Activated CD4-positive, alpha-beta T cell treated with anti-CD3 and anti-CD28 coated beads, Interleukin-2, amount 10 ng/mL, durations not matched to agents 24 days and 14 days (primary cell): ENCODE measurements at regions of chr6 and their contacts with region 1.

Region 1: GRCh38 chr6:155126727-155127439 is 131.8 kb downstream of the TIAM2 start:
- DNase-seq: peak; percentile 72
- H3K4me3 Mint-ChIP-seq: peak overlapping the region; percentile 68
- H3K27ac Mint-ChIP-seq: peak overlapping the region; percentile 97
- H3K4me1 Mint-ChIP-seq: peaks cover 51% of the 10 kb centered on the region
- H3K27me3 Mint-ChIP-seq: no peaks in the 10 kb centered on the region

Region 2: GRCh38 chr6:154928325-154928922 is 198.5 kb before region 1 on chr6:
- intact Hi-C with region 1: loop called (anchors 1 kb)
- DNase-seq: peak; percentile 90
- H3K4me3 Mint-ChIP-seq: no peak overlapping the region
- H3K27ac Mint-ChIP-seq: peak overlapping the region; percentile 12
- H3K4me1 Mint-ChIP-seq: peaks cover 19% of the 10 kb centered on the region
- H3K27me3 Mint-ChIP-seq: no peaks in the 10 kb centered on the region

Region 3: DNA sequence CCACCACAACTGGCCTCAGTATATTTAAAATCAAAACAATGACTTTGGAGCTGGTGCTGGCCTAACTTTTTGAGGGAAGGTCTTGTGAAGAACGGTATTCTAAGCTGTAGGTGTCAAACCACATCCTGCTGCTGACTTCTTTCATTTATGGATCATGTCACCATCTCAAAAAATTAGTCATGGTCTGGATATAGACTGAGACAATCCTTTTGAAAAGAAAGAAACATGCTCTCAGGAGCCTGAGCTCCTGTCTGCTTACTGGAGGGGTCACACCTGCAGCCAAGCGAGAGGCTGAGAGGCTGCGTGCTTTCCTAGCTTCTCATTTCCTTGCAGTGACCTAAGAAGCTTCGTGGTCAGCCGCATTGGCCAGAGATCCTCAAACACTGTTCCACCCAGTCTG is 76.6 kb before region 1 on chr6:
- intact Hi-C with region 1: loop called (anchors 1 kb)
- DNase-seq: peak; percentile 82
- H3K4me3 Mint-ChIP-seq: peak overlapping the region; percentile 65
- H3K27ac Mint-ChIP-seq: peak overlapping the region; percentile 95
- H3K4me1 Mint-ChIP-seq: peaks cover 36% of the 10 kb centered on the region
- H3K27me3 Mint-ChIP-seq: no peaks in the 10 kb centered on the region

Region 4: GRCh38 chr6:155062866-155063341 is 64.0 kb before region 1 on chr6:
- intact Hi-C with region 1: no loop called
- DNase-seq: no peak
- H3K4me3 Mint-ChIP-seq: no peak overlapping the region
- H3K27ac Mint-ChIP-seq: no peak overlapping the region
- H3K4me1 Mint-ChIP-seq: peaks cover 10% of the 10 kb centered on the region
- H3K27me3 Mint-ChIP-seq: peaks cover 2% of the 10 kb centered on the region

Region 5: GRCh38 chr6:155115893-155116570 is 10.9 kb before region 1 on chr6:
- intact Hi-C with region 1: loop called (anchors 1 kb)
- DNase-seq: no peak
- H3K4me3 Mint-ChIP-seq: peak overlapping the region; percentile 47
- H3K27ac Mint-ChIP-seq: peak overlapping the region; percentile 86
- H3K4me1 Mint-ChIP-seq: peaks cover 31% of the 10 kb centered on the region
- H3K27me3 Mint-ChIP-seq: no peaks in the 10 kb centered on the region

Region 6: DNA sequence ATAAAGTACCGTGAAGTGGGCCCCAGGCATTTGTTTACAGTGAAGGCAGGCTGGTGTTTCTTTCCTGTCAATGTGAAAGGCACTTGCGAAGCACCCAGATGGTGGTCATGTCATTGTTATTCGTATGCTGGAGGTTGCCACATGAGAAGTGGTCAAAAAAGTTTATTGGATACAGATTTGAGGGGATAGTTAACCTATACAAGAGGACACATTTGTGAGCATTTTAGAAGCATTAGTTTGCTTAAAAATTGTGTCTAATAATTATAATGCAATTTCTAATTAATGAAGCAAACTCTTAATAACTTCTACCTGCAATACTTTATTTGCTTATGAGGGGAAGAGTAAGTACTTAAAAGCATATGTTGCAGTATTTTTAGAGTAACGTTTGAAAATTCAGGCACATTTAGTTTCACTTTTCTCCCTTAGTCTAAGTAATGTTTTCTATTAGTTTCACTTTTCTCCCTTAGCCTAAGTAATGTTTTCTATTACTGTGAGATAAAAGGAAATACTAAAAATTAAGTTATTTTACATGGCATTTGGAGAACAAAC is 16.2 kb after region 1 on chr6:
- intact Hi-C with region 1: no loop called
- DNase-seq: peak; percentile 62
- H3K4me3 Mint-ChIP-seq: peak overlapping the region; percentile 57
- H3K27ac Mint-ChIP-seq: peak overlapping the region; percentile 67
- H3K4me1 Mint-ChIP-seq: peaks cover 38% of the 10 kb centered on the region
- H3K27me3 Mint-ChIP-seq: no peaks in the 10 kb centered on the region

Region 7: DNA sequence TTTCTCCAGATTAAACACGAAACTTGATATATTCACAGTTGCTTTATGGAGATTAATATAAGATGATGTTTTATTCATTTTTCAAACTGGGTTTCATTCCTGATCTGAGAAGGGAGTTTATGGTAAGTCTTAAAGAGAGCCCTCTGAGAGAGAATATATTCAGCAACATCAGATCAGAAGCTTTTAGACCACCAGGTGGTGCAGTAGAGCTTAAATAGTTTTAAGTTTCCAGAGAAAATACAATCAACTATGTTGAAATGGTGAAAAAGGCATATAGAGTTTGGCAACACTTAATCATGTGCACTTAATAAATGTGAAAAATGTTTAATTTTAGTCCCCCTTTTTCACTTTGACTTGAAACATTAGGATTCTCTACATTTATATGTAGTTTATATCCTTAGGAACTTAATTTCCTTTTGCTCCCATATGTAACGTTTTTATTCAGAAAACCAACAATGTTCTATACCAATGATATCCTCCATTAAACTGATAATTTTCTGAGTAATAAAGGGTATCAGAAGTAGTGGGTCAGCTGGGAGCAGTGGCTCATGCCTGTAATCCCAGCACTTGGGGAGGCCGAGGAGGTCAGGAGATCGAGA is 50.6 kb after region 1 on chr6:
- intact Hi-C with region 1: no loop called
- DNase-seq: peak; percentile 87
- H3K4me3 Mint-ChIP-seq: no peak overlapping the region
- H3K27ac Mint-ChIP-seq: no peak overlapping the region
- H3K4me1 Mint-ChIP-seq: peaks cover 28% of the 10 kb centered on the region
- H3K27me3 Mint-ChIP-seq: no peaks in the 10 kb centered on the region

Region 8: DNA sequence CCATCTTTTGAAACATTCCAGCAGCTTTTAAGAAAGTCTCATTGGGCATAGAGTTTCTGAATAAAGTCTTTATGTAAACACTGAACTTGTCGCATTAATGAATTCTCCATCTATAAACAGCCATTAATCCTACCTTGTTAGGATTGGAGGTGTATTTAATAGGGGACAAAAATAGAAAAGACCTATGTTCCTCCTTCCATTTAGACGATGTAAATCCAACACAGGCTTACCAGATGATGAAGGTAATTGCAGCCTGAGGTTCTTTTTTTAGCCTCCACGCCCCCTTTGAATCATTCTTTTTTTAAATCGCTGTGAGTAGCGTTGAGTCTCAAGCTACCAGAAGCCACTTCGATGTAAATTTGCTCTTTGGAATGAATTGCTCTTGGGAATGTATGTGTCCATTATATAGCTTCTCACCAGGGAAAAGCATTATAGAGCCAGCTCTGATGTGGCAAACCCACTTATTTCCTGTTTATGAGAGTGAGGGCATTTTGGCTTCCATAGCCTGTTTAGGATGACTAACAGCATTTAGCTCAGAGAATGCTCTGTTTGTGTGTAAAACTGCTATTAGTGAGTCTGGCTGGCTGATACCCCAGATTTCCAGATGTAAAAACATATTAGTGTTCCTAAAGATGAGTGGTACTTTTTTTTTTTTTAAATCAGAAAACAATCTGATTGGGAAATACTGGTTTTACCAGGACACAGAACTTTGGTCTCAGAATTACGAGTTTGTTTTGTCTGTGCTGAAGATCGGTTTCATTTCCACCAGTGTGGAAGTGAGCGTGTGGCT is 62.0 kb after region 1 on chr6:
- intact Hi-C with region 1: loop called (anchors 1 kb)
- DNase-seq: no peak
- H3K4me3 Mint-ChIP-seq: peak overlapping the region; percentile 16
- H3K27ac Mint-ChIP-seq: peak overlapping the region; percentile 91
- H3K4me1 Mint-ChIP-seq: peaks cover 43% of the 10 kb centered on the region
- H3K27me3 Mint-ChIP-seq: no peaks in the 10 kb centered on the region